ENCODE measurements at regions of chr6 and their contacts with region 1.

Region 1: GRCh38 chr6:57172136-57173055 is at the start of gene BAG2:
- DNase-seq: peak; percentile 55 to 86 (median 80)
- H3K4me3 ChIP-seq: peak within 1 kb of the TSS; percentile 61 to 93 (median 81)
- H3K27ac ChIP-seq: peak within 1 kb of the TSS in 58 of 59 donors; percentile 36 to 94 (median 84)
- H3K27me3 ChIP-seq: no peaks in the 10 kb centered on the region
- CTCF ChIP-seq: peak in 36 of 56 donors; percentile 4 to 58 (median 30)
- total RNA-seq, gene BAG2: 1.7 to 10.3 (median 4.0) TPM

Region 2: DNA sequence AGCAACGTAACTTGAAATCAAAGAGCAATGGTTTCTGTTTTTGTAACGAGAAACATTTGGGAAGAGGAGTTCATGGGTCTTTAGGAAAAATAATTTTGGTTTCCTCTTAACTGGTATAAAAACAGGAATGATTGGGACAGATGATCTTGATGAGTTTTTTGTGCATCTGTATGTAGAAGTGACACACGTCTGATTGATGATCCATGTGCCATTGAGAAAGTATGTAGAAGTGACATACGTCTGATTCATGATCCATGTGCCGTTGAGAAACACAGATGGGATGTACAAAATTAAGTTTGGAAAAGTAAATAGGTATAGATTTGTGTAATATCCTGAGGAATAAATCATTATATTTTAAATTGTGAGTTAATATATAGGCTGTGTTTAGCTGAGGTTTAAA is 123.8 kb before region 1 on chr6:
- intact Hi-C with region 1: loop called in 1 of 2 experiments (anchors 5 kb)
- DNase-seq: no peak
- H3K4me3 ChIP-seq: peak overlapping the region in 44 of 59 donors; percentile 0 to 53 (median 34)
- H3K27ac ChIP-seq: no peak overlapping the region
- H3K27me3 ChIP-seq: no peaks in the 10 kb centered on the region
- CTCF ChIP-seq: no peak

Region 3: GRCh38 chr6:57089687-57090460 is 82.5 kb before region 1 on chr6 and contains the start of gene ZNF451:
- intact Hi-C with region 1: loop called in 1 of 2 experiments (anchors 5 kb)
- DNase-seq: peak; percentile 96 to 99 (median 98)
- H3K4me3 ChIP-seq: peak within 1 kb of the TSS; percentile 40 to 83 (median 71)
- H3K27ac ChIP-seq: peak within 1 kb of the TSS in 58 of 59 donors; percentile 19 to 94 (median 82)
- H3K27me3 ChIP-seq: no peaks in the 10 kb centered on the region
- CTCF ChIP-seq: peak in 41 of 56 donors; percentile 9 to 65 (median 32)
- total RNA-seq, gene ZNF451: 70.0 to 124 (median 97.6) TPM

Region 4: GRCh38 chr6:57221936-57222742 is 49.7 kb after region 1 on chr6 and contains the start of gene RAB23:
- intact Hi-C with region 1: loop called (anchors 2 kb)
- DNase-seq: peak; percentile 67 to 93 (median 72)
- H3K4me3 ChIP-seq: peak within 1 kb of the TSS; percentile 66 to 99 (median 92)
- H3K27ac ChIP-seq: peak within 1 kb of the TSS; percentile 7 to 93 (median 77)
- H3K27me3 ChIP-seq: no peaks in the 10 kb centered on the region
- CTCF ChIP-seq: peak in 29 of 56 donors; percentile 3 to 62 (median 24)
- total RNA-seq, gene RAB23: 7.9 to 20.9 (median 14.9) TPM

Measured in dorsolateral prefrontal cortex (tissue), 120 donors.